ENCODE measurements at regions of chr1 and their contacts with region 1.

Region 1: GRCh38 chr1:212477014-212477679 is 44.4 kb downstream of the NENF start:
- DNase-seq: peak; percentile 91
- H3K4me3 Mint-ChIP-seq: no peak overlapping the region
- H3K27ac Mint-ChIP-seq: no peak overlapping the region
- H3K4me1 Mint-ChIP-seq: peaks cover 18% of the 10 kb centered on the region
- H3K27me3 Mint-ChIP-seq: peaks cover 9% of the 10 kb centered on the region

Region 2: GRCh38 chr1:212595787-212596714 is 118.9 kb after region 1 on chr1:
- CTCF ChIA-PET with region 1: interaction called, 12 read pairs
- intact Hi-C with region 1: loop called (anchors 2 kb)
- DNase-seq: peak; percentile 69
- H3K4me3 Mint-ChIP-seq: peak overlapping the region; percentile 44
- H3K27ac Mint-ChIP-seq: peak overlapping the region; percentile 94
- H3K4me1 Mint-ChIP-seq: peaks cover 34% of the 10 kb centered on the region
- H3K27me3 Mint-ChIP-seq: peaks cover 21% of the 10 kb centered on the region

Region 3: DNA sequence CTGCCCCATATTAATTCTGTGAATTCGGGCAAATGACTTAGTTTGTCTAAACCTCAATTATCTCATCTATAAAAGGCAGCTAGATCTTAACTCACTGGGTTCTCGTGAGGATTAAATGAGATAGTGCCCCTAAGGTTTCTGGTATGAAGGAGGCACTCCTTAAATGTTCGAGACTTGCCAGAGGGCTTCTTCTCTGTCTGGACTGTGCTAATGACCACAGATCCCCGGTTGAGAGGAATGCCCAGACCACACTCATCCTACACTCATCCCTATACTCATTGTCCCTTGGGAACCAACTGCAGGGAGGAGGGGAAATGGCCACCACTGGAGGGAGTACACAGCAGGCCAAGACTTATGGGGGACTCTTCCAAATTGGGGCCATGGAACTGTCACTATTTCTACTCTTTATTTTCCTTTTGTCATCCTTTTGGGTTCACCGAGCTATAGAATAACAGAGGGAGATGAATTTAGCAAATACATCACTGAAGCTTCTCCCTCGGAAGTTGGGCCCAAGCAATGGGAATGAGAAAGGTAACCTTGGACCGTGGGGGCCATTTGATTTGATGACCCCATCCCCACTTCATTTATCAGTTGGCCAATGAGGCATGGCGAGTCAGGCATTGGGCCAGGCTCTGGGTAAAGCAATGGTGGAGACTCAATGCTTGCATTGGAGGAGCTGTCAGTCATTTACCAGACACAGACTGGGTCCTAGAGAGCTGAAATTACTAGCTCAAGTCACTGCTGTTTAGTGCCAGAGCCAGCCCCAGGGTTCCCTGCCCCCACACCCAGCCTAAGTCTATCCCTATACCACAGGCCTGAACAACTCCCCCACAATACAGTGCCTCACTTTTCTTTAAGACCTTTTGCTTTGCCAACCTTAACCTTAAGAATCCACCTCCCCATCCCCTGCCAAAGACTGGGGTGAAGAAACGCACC is 136.6 kb after region 1 on chr1:
- CTCF ChIA-PET with region 1: interaction called, 21 read pairs
- intact Hi-C with region 1: loop called (anchors 1 kb)
- DNase-seq: peak; percentile 34
- H3K4me3 Mint-ChIP-seq: no peak overlapping the region
- H3K27ac Mint-ChIP-seq: peak overlapping the region; percentile 80
- H3K4me1 Mint-ChIP-seq: peaks cover 52% of the 10 kb centered on the region
- H3K27me3 Mint-ChIP-seq: peaks cover 3% of the 10 kb centered on the region

Region 4: GRCh38 chr1:212630158-212630900 is 153.2 kb after region 1 on chr1:
- CTCF ChIA-PET with region 1: interaction called, 24 read pairs
- intact Hi-C with region 1: loop called (anchors 1 kb)
- DNase-seq: peak; percentile 79
- H3K4me3 Mint-ChIP-seq: no peak overlapping the region
- H3K27ac Mint-ChIP-seq: no peak overlapping the region
- H3K4me1 Mint-ChIP-seq: peaks cover 6% of the 10 kb centered on the region
- H3K27me3 Mint-ChIP-seq: no peaks in the 10 kb centered on the region

Region 5: GRCh38 chr1:212699104-212699624 is 222.0 kb after region 1 on chr1:
- CTCF ChIA-PET with region 1: interaction called, 13 read pairs
- intact Hi-C with region 1: loop called (anchors 1 kb)
- DNase-seq: peak; percentile 67
- H3K4me3 Mint-ChIP-seq: peak overlapping the region; percentile 87
- H3K27ac Mint-ChIP-seq: no peak overlapping the region
- H3K4me1 Mint-ChIP-seq: peaks cover 38% of the 10 kb centered on the region
- H3K27me3 Mint-ChIP-seq: peaks cover 11% of the 10 kb centered on the region

Region 6: GRCh38 chr1:212782422-212783154 is 305.4 kb after region 1 on chr1:
- CTCF ChIA-PET with region 1: interaction called, 14 read pairs
- intact Hi-C with region 1: loop called (anchors 1 kb)
- DNase-seq: peak; percentile 13
- H3K4me3 Mint-ChIP-seq: no peak overlapping the region
- H3K27ac Mint-ChIP-seq: no peak overlapping the region
- H3K4me1 Mint-ChIP-seq: peaks cover 13% of the 10 kb centered on the region
- H3K27me3 Mint-ChIP-seq: no peaks in the 10 kb centered on the region